Activated T-helper 1 cell treated with anti-CD3 and anti-CD28 coated beads, Interleukin-12 subunit alpha, Interleukin-12 subunit beta, Interleukin-2, Interleukin-4 antibody, amounts not matched to agents 30 ng/mL and 10 ng/mL and 1 ng/mL, durations not matched to agents 14 hours and 24 hours and 36 hours (primary cell): ENCODE measurements at regions of chr9 and their contacts with region 1.

Region 1: DNA sequence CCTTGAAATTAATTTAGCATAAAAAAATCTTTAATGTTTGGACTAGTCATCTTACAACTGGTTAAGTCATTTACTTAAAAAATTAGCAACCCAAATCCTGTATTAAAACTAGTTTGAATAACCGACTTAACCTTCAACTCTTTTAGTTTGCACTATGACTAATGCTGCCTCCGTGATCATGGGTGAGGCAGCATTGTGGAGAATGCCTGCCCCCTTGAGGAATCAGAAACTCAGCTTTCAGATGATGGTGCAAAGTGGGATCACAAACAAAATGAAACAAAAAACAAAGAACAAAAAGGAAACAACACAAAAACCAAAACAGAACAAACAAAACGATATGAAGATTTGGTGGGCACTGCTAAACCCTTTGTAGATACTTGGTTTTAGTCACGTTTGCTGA is 127.0 kb upstream of the PALM2AKAP2 start:
- DNase-seq: no peak
- H3K4me3 Mint-ChIP-seq: no peak overlapping the region
- H3K27ac Mint-ChIP-seq: no peak overlapping the region
- H3K4me1 Mint-ChIP-seq: peaks cover 5% of the 10 kb centered on the region
- H3K27me3 Mint-ChIP-seq: peaks cover 8% of the 10 kb centered on the region

Region 2: GRCh38 chr9:109574068-109574882 is 78.7 kb before region 1 on chr9:
- intact Hi-C with region 1: loop called (anchors 2 kb)
- DNase-seq: peak; percentile 14
- H3K4me3 Mint-ChIP-seq: no peak overlapping the region
- H3K27ac Mint-ChIP-seq: no peak overlapping the region
- H3K4me1 Mint-ChIP-seq: no peaks in the 10 kb centered on the region
- H3K27me3 Mint-ChIP-seq: peaks cover 19% of the 10 kb centered on the region

Region 3: DNA sequence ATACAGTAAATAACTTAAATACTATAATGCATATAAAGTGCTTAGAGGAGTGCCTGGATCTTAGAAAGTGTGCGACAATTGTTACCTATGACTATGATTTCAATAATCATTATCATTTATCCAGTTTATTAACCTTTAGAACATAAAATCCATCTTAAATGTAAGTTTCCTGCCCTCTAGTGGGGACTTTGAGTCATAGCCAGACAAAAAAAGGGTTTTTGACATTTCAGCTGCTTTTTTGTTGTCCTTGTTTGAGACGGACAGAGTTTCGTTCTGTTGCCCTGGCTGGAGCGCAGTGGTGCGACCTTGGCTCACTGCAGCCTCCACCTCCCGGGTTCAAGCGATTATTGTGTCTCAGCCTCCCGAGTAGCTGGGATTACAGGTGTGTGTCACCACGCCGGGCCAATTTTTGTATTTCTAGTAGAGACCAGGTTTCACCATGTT is 564.7 kb after region 1 on chr9:
- intact Hi-C with region 1: no loop called
- DNase-seq: no peak
- H3K4me3 Mint-ChIP-seq: no peak overlapping the region
- H3K27ac Mint-ChIP-seq: no peak overlapping the region
- H3K4me1 Mint-ChIP-seq: peaks cover 6% of the 10 kb centered on the region
- H3K27me3 Mint-ChIP-seq: peaks cover 15% of the 10 kb centered on the region